Stomach (tissue), 19 donors: ENCODE measurements at regions of chr12 and their contacts with region 1.

Region 1: GRCh38 chr12:109775172-109775881 is 57.9 kb downstream of the TRPV4 start:
- DNase-seq: peak; percentile 82 to 90
- H3K4me3 ChIP-seq: no peak overlapping the region
- H3K27ac ChIP-seq: no peak overlapping the region
- H3K4me1 ChIP-seq: peaks cover 9 to 13% (median 12%) of the 10 kb centered on the region in 4 donors
- H3K27me3 ChIP-seq: peaks cover 0 to 17% (median 0%) of the 10 kb centered on the region in 3 donors
- CTCF ChIP-seq: peak in 5 of 7 experiments; percentile 70 to 82 (median 75)
- EP300 ChIP-seq: no peak
- POLR2A ChIP-seq: no peak

Region 2: DNA sequence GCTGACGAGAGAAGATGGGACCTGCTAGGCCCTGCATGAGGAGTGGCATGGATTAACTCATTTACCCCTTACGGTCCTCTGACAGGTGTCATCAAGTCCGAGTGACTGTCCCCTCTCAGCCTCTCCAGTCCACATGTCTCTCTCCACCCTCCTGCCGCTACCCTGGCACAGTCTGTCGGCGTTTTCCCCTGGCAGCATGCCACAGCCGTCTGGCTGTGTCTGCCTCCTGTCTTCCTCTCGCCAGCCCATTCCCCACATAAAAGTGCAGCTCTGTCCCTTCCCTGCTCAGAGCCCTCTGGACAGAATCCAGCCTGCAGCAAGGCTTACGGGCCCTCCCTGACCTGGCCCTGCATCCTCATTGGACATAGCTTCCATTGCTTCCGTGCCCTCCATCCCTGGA is 252.3 kb before region 1 on chr12:
- intact Hi-C with region 1: loop called (anchors 10 kb)
- DNase-seq: peak in 1 of 2 donors; percentile 62
- H3K4me3 ChIP-seq: no peak overlapping the region
- H3K27ac ChIP-seq: no peak overlapping the region
- H3K4me1 ChIP-seq: no peaks in the 10 kb centered on the region
- H3K27me3 ChIP-seq: no peaks in the 10 kb centered on the region
- CTCF ChIP-seq: no peak
- EP300 ChIP-seq: no peak
- POLR2A ChIP-seq: no peak

Region 3: DNA sequence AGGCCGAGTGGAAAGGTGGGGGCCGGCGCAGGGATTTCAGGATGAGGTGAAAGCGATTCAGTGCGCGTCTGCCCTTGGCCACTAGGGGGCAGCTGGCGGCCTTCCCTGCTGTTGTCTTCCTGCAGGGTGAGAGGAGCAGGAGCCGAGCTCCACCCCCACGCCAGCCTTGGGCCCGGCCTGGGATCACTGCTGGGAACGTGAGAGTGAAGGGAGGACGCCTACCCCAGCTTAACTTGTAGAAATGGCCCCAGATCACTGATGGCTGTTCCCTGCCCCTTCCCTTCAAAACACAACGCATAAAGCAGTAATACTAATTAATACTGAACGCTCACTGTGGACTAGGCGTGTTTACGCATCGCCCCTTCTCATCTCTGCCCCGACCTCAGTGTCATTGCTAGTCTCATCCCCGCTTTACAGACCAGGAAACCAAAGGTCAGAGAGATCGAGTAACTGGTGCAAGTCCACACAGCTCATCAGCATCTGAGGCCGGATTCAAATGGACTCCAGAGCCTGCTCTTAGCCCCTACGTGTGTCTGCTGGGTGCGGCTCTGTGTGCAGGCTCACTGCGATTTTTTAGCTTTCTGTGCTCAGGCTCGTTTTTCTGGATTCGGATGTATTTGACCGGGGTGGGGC is 177.4 kb before region 1 on chr12:
- intact Hi-C with region 1: loop called (anchors 2 kb)
- DNase-seq: peak; percentile 86 to 95
- H3K4me3 ChIP-seq: no peak overlapping the region
- H3K27ac ChIP-seq: no peak overlapping the region
- H3K4me1 ChIP-seq: peaks cover 0 to 17% (median 6%) of the 10 kb centered on the region in 4 donors
- H3K27me3 ChIP-seq: peaks cover 0 to 10% (median 0%) of the 10 kb centered on the region in 3 donors
- CTCF ChIP-seq: peak in 5 of 7 experiments; percentile 93 to 95 (median 95)
- EP300 ChIP-seq: no peak
- POLR2A ChIP-seq: no peak

Region 4: DNA sequence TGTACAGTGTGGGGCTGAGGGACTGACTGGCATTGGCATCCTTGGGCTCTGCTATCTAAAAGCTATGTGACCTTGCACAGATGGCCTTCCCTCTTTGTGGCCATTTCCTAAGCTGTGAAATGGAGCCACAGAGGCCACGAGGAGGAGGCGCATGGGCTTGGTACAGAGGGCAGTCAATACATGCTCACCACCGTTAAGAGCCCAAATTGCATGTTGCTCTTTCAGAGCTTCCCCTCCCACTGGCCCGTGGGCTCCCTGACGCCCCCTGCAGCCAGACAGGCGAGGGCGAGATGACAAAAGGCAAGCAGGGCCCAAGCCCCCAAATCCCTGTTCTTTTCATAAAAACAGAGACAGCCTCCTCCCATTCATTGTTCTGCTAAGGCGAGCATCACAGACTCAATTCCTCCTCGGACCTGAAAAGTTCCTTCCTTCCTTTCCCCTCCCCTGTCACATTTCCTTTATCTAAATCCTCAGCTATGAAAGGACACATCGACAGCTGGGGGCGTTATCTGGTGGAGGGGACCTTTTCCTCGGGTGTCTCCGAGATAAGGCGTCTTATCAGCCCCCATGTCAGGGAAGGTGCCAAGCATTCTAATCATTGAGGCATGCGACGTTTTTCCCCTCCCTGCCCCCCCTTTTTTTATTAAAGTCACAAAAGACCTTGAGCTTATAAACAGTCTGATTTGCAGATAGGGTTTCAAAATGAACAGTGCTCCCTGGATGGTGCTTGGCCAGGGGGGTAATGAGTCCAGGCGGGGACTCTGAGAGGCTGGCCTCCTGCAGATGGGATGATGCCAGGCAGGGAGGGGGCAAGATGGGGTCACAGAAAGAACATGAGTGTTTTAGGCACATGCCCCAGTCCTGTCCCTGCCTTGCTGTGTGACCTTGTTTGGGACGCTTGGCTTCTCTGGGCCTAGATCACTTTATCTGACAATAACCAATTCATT is 35.3 kb before region 1 on chr12:
- intact Hi-C with region 1: no loop called
- DNase-seq: peak in 1 of 2 donors; percentile 40
- H3K4me3 ChIP-seq: no peak overlapping the region
- H3K27ac ChIP-seq: peak overlapping the region in 3 of 5 donors; percentile 10 to 33 (median 20)
- H3K4me1 ChIP-seq: peaks cover 0 to 13% (median 7%) of the 10 kb centered on the region in 4 donors
- H3K27me3 ChIP-seq: peaks cover 0 to 21% (median 0%) of the 10 kb centered on the region in 3 donors
- CTCF ChIP-seq: no peak
- EP300 ChIP-seq: no peak
- POLR2A ChIP-seq: no peak